Transverse colon (tissue), 4 donors: ENCODE measurements at regions of chr14 and their contacts with region 1.

Region 1: GRCh38 chr14:79661762-79662161 is 549.5 kb downstream of the DIO2 start:
- DNase-seq: no peak
- H3K4me3 ChIP-seq: no peak overlapping the region
- H3K27ac ChIP-seq: no peak overlapping the region
- H3K4me1 ChIP-seq: no peaks in the 10 kb centered on the region
- H3K27me3 ChIP-seq: no peaks in the 10 kb centered on the region
- CTCF ChIP-seq: no peak
- EP300 ChIP-seq: no peak
- POLR2A ChIP-seq: no peak

Region 2: DNA sequence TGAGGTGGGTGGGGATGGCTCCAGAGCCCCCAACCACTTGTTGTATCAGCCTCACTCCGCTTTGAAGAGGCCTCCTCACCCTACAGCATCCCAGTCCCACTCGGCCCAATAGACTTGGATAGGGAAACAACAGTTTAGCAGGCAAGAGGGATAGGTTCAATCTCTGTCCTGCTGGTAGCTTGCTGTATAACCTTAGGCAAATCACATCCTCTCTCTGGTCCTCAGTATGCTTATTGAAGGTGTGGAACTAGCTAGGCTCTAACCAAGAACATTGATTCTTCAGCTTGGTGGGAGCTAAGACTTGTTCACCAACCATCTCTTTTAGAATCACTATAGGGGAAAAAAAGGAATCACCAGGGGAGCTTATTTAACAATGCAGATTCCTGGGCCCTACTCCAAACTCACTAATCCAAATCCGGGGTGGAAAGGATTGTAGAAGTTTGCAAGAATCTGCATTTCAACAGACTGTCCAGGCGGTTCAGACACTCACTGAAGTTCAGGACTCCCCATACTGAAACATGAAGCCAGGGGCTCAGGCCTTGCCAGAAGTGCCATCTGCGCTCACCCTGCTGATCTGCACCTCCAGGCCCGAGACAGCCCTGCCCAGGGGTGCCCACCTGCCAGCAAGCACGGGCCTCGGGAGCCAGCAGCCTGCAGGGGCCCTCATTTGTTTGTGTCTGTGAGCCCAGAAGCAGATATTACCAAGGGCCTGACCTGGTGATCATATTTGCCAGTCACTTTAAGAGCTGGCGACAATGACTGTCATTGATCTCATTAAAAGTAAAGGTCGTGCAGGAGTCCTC is 1748.8 kb before region 1 on chr14:
- in situ Hi-C with region 1: no loop called
- intact Hi-C with region 1: loop called (anchors 5 kb)
- DNase-seq: no peak
- H3K4me3 ChIP-seq: no peak overlapping the region
- H3K27ac ChIP-seq: no peak overlapping the region
- H3K4me1 ChIP-seq: no peaks in the 10 kb centered on the region
- H3K27me3 ChIP-seq: no peaks in the 10 kb centered on the region
- CTCF ChIP-seq: no peak
- EP300 ChIP-seq: no peak
- POLR2A ChIP-seq: no peak

Region 3: GRCh38 chr14:79856381-79856780 is 194.6 kb after region 1 on chr14:
- in situ Hi-C with region 1: no loop called
- intact Hi-C with region 1: no loop called
- DNase-seq: no peak
- H3K4me3 ChIP-seq: no peak overlapping the region
- H3K27ac ChIP-seq: no peak overlapping the region
- H3K4me1 ChIP-seq: no peaks in the 10 kb centered on the region
- H3K27me3 ChIP-seq: no peaks in the 10 kb centered on the region
- CTCF ChIP-seq: no peak
- EP300 ChIP-seq: no peak
- POLR2A ChIP-seq: no peak

Region 4: DNA sequence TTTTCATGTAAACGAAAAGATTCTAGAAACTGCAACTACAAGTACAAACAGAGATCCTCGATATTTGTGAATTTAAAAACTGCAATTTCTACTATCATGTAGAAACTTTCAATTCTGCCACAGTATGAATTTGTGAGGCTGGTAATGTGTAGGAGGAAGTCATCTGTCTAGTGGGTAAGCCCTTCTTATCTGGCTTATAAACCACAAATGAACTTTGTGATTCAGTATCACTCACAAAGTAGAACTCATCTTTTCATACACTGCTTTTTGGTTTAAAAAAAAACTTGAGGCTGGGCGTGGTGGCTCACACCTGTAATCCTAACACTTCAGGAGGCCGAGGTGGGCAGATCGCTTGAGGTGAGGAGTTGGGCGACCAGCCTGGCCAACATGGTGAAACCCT is 1538.3 kb after region 1 on chr14:
- in situ Hi-C with region 1: no loop called
- intact Hi-C with region 1: no loop called
- DNase-seq: no peak
- H3K4me3 ChIP-seq: no peak overlapping the region
- H3K27ac ChIP-seq: no peak overlapping the region
- H3K4me1 ChIP-seq: peaks cover 0 to 1% (median 0%) of the 10 kb centered on the region in 4 donors
- H3K27me3 ChIP-seq: no peaks in the 10 kb centered on the region
- CTCF ChIP-seq: no peak
- EP300 ChIP-seq: no peak
- POLR2A ChIP-seq: no peak